HEK293 (cell line): ENCODE measurements at regions of chr11 and their contacts with region 1.

Region 1: GRCh38 chr11:128884703-128885338 is 6.3 kb upstream of the KCNJ5 start:
- H3K4me3 ChIP-seq: no peak overlapping the region
- H3K27ac ChIP-seq: no peak overlapping the region
- H3K4me1 ChIP-seq: no peaks in the 10 kb centered on the region
- CTCF ChIP-seq: peak; percentile 39; the same call in 1 of the 2 replicates

Region 2: DNA sequence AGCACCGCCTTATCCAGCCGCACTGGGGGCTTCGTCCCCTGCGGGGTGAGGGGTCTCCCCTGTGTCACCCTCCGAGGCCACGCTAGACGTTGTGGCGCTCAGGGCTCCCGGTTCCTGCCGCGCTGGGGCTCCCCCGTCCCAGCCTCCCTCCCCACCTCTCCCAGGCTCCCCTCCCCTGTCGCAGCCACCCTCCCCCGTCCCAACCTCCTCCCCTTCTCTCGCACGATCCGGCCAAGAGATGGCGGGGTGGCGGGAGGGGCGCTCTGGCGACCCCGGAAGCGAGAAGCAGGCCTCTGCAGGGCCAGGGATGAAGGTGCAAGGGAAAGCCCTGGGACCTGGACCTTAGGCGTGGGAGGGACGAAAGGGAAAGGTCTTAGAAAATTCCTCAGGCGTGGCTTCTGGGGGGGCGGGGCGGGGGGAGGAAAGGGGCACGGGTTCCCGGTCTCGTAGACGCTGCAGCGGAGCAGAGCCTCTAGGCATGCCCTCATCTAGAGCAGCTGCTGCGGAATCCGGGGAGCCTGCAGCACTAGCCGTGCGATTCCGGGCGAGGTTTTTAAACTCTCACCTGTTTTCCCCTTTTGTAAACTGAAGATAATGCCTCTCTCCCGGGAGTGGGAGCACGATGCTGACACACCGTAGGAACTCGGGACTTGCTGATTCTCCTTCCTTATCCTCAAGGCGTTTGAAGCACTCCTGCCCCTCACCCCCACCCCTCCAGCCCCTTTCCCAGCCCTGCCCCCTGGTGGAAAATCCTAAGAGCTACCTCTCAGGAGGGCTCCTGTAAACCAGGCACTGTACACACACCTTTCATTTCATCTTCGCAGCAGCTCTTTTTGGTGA is 20.7 kb after region 1 on chr11:
- CTCF ChIA-PET with region 1: interaction called, 30 read pairs
- POLR2A ChIA-PET with region 1: no interaction called
- H3K4me3 ChIP-seq: peak overlapping the region; percentile 51
- H3K27ac ChIP-seq: peak overlapping the region; percentile 75; the same call in 1 of the 2 replicates
- H3K4me1 ChIP-seq: 0 out of 2 replicates have a peak, but pooled peaks cover 3% of the 10 kb centered on the region
- CTCF ChIP-seq: no peak; the same call in 1 of the 2 replicates

Region 3: GRCh38 chr11:128936606-128937251 is 51.9 kb after region 1 on chr11:
- CTCF ChIA-PET with region 1: interaction called, 37 read pairs
- POLR2A ChIA-PET with region 1: no interaction called
- H3K4me3 ChIP-seq: no peak overlapping the region
- H3K27ac ChIP-seq: no peak overlapping the region
- H3K4me1 ChIP-seq: no peaks in the 10 kb centered on the region
- CTCF ChIP-seq: no peak

Region 4: DNA sequence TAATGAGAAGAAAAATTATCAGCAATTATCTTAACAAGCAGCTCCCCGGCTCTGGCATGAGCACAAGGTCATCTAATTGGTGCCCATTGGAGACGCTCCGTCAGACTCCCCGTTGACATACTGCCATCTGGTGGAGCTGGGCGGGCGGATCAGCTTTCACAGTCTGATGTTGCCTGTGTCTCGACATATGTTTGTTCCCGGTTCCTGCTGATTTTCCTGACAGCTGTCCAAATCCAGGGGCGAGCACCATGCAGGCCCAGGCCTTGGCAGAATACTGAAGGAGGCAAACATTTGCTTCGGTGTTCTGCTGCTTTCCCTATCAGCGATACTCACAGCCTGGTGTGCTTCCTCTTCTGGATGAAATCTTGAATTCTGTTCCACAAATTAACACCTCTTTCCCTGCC is 447.1 kb after region 1 on chr11:
- CTCF ChIA-PET with region 1: interaction called, 12 read pairs
- POLR2A ChIA-PET with region 1: no interaction called
- H3K4me3 ChIP-seq: no peak overlapping the region
- H3K27ac ChIP-seq: no peak overlapping the region
- H3K4me1 ChIP-seq: no peaks in the 10 kb centered on the region
- CTCF ChIP-seq: peak; percentile 65